CD4-positive, alpha-beta T cell (primary cell): ENCODE measurements at regions of chr2 and their contacts with region 1.

Region 1: DNA sequence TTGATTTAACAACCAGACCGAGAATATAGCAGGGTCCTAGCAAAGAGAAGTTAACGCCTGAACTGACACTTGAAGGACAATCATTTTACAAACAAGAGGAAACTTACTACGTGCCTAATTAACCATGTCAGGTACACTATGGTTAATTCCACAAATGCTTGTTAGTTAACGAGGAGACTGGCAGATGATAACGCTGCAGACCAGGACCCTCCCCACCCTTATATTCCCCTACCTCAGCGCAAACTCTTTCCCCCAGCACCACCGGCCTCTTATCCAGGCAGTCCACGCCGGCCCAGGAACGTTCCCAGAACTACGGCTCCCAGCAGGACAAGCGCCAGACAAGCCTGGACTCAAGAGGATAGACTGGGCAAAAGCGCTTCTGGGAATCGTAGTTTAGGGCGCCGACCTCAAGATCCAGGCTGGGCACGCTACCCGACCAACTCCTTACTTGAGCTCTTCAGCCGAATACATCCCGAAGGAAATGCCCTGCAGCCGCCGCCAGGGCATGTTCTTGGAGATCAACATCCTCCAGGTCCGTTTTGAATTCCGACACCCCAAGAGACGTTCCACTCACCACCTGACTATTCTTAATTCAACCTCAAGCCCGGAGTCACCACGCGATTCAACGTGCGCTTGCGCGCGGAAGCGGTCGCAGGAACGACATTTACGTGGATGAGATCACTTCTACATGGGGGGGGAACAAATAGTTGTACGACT is at the start of gene POLR1A:
- DNase-seq: peak; percentile 67 to 93 (median 75)
- ATAC-seq: peak; percentile 75
- H3K4me3 ChIP-seq: peak within 1 kb of the TSS; percentile 80
- H3K4me3 Mint-ChIP-seq: peak within 1 kb of the TSS; percentile 89
- H3K27ac ChIP-seq: peak within 1 kb of the TSS; percentile 81 to 87
- H3K27ac Mint-ChIP-seq: peak within 1 kb of the TSS; percentile 95
- H3K4me1 ChIP-seq: peaks cover 16% of the 10 kb centered on the region
- H3K4me1 Mint-ChIP-seq: peaks cover 60% of the 10 kb centered on the region
- H3K27me3 ChIP-seq: no peaks in the 10 kb centered on the region
- H3K27me3 Mint-ChIP-seq: no peaks in the 10 kb centered on the region
- CTCF ChIP-seq: no peak
- total RNA-seq, gene POLR1A: 13.1 to 13.4 TPM

Region 2: DNA sequence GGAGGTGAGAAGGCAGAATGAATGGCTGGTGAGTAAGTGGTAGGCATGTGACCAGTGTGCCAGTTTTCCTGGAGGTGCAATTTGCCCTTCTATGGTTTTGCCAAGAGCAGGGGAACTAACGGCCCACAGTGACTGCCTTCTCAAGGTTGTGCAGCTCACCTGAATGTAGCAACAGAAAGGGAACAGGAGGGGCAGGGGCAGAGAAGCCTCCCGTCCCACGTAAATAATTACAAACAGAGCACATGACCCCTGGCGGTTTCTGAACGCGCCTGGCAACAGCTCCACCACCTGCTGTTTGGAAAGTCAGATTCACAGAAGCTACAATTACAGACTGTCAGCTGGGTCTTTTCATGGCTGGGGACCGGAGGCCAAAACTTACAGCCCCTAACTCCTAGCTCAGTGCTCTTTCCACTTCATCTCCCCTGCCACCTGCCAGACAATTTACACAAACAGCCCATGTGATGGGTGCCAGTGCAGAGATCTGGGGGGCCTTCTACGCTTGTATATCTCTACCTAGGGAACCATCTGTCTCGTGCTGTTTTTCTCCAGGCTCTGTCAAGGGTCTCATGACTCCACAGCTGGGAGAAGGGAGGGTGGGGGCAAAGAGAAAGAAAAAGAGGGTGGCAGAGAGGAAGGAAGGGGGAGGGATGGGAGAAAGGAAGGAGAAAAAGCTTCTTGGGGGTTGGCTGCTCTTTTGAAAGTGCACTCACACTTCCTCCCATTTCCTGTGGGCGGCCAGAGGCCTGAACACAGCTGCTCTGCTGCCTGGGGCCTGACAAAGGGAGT is 69.3 kb before region 1 on chr2:
- CTCF ChIA-PET with region 1: interaction called, 3 read pairs
- POLR2A ChIA-PET with region 1: interaction called, 22 read pairs
- intact Hi-C with region 1: loop called in 1 of 2 experiments (anchors 2 kb)
- DNase-seq: peak; percentile 47 to 91 (median 68)
- ATAC-seq: peak; percentile 53
- H3K4me3 ChIP-seq: peak overlapping the region; percentile 29
- H3K4me3 Mint-ChIP-seq: peak overlapping the region; percentile 78
- H3K27ac ChIP-seq: peak overlapping the region; percentile 88 to 92
- H3K27ac Mint-ChIP-seq: peak overlapping the region; percentile 97
- H3K4me1 ChIP-seq: peaks cover 92% of the 10 kb centered on the region
- H3K4me1 Mint-ChIP-seq: peaks cover 72% of the 10 kb centered on the region
- H3K27me3 ChIP-seq: no peaks in the 10 kb centered on the region
- H3K27me3 Mint-ChIP-seq: peaks cover 3% of the 10 kb centered on the region
- CTCF ChIP-seq: peak; percentile 46

Region 3: DNA sequence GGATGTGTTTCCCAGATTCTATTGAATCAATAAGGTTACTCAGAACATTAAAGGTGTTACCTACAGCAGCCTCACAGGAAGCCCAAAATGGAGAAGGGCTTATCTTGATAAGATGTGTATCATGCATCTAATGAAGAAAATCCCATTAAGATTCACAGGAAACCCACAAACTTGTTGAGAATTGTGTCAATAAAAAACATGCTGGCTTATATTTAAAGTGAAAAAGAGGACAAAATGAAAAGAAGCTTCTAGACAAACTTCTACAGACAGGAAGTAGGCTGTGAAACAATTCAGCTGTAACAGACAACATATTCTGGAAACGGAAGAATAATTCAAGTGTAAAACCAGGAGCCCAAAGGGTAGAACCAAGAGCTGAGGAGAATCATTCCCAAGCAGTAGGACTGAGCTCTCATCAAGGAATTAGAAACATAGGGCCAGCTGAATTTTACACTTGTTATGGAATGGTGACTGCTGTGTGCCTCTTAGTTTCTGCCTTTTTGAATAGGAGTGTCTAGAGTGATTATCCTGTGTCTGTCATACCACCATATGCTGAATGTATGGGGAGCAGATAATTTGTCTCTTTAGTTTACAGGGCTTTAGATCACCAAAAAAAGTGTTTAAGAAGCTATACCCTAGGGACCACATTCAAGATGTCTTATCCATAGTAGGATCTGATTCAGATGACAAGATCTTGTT is 80.3 kb after region 1 on chr2:
- CTCF ChIA-PET with region 1: no interaction called
- POLR2A ChIA-PET with region 1: interaction called, 21 read pairs
- intact Hi-C with region 1: no loop called
- DNase-seq: peak in 4 of 14 experiments; percentile 23 to 75 (median 68)
- ATAC-seq: peak; percentile 73
- H3K4me3 ChIP-seq: peak overlapping the region; percentile 15
- H3K4me3 Mint-ChIP-seq: peak overlapping the region; percentile 75
- H3K27ac ChIP-seq: peak overlapping the region; percentile 42 to 65
- H3K27ac Mint-ChIP-seq: peak overlapping the region; percentile 95
- H3K4me1 ChIP-seq: peaks cover 60% of the 10 kb centered on the region
- H3K4me1 Mint-ChIP-seq: peaks cover 73% of the 10 kb centered on the region
- H3K27me3 ChIP-seq: no peaks in the 10 kb centered on the region
- H3K27me3 Mint-ChIP-seq: no peaks in the 10 kb centered on the region
- CTCF ChIP-seq: no peak

Region 4: GRCh38 chr2:86623651-86624541 is 518.5 kb after region 1 on chr2 and contains the start of gene RNF103:
- CTCF ChIA-PET with region 1: no interaction called
- POLR2A ChIA-PET with region 1: no interaction called
- intact Hi-C with region 1: loop called in 1 of 2 experiments (anchors 10 kb)
- DNase-seq: peak; percentile 85 to 96 (median 94)
- ATAC-seq: peak; percentile 88
- H3K4me3 ChIP-seq: peak within 1 kb of the TSS; percentile 61
- H3K4me3 Mint-ChIP-seq: peak within 1 kb of the TSS; percentile 94
- H3K27ac ChIP-seq: peak within 1 kb of the TSS; percentile 91 to 93
- H3K27ac Mint-ChIP-seq: peak within 1 kb of the TSS; percentile 92
- H3K4me1 ChIP-seq: peaks cover 10% of the 10 kb centered on the region
- H3K4me1 Mint-ChIP-seq: peaks cover 40% of the 10 kb centered on the region
- H3K27me3 ChIP-seq: no peaks in the 10 kb centered on the region
- H3K27me3 Mint-ChIP-seq: peaks cover 3% of the 10 kb centered on the region
- CTCF ChIP-seq: no peak
- total RNA-seq, gene RNF103: 124 to 130 TPM